ENCODE measurements at regions of chr1 and their contacts with region 1.

Region 1: GRCh38 chr1:21511579-21512522 is 2.6 kb downstream of the ALPL start:
- DNase-seq: no peak
- H3K4me3 ChIP-seq: peak overlapping the region in 5 of 8 donors; percentile 46 to 67 (median 49)
- H3K27ac ChIP-seq: peak overlapping the region in 3 of 8 donors; percentile 1 to 30 (median 15)
- H3K4me1 ChIP-seq: peaks cover 8 to 74% (median 34%) of the 10 kb centered on the region in 6 donors
- H3K27me3 ChIP-seq: peaks cover 0 to 45% (median 22%) of the 10 kb centered on the region in 7 donors
- CTCF ChIP-seq: no peak
- POLR2A ChIP-seq: no peak

Region 2: DNA sequence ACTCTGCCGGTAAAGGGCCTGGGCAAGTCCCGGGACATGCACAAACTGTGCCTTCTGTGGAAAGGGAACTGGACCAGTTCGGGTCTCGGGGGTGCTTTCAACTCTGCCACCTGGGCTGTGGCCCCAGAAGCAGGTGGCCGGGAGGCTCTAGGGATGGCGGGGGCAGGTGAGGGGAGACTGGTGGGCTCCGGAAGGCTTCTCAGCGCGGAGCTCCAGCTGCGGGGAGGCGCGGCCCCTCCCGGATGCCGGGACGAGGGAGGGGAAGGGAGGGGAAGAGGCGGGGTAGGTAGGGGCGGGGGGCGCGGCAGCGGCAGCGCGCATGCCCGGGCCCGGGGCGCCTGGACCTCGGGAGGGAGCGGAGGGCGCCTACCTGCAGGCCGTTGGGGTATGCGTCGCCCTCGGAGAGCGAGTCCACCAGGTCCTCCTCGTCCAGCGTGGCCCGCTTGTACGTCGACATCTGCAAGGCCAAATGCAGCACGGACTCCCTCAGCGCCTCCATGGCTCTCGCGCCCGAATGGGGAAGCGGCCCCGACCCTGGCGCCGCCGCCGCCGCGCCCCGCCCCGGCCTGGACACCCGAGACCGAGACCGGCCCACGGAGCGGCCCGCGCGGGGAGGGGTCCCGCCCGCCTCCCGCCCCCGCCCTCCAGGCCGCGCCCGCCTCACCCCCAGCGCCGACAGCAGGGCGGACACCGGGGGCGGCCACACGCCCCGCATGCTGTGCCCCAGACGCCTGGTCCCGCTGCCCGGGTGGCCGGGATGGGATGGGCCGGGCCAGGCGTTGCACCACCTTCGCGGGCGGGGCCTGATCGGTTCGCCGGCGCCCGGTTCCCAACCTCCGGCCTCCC is 221.9 kb before region 1 on chr1 and contains the start of gene ECE1:
- intact Hi-C with region 1: no loop called
- DNase-seq: peak; percentile 95
- H3K4me3 ChIP-seq: peak within 1 kb of the TSS; percentile 63 to 90 (median 70)
- H3K27ac ChIP-seq: peak within 1 kb of the TSS; percentile 83 to 96 (median 92)
- H3K4me1 ChIP-seq: peaks cover 33 to 97% (median 75%) of the 10 kb centered on the region in 6 donors
- H3K27me3 ChIP-seq: no peaks in the 10 kb centered on the region
- CTCF ChIP-seq: peak in 1 of 11 experiments; percentile 11
- POLR2A ChIP-seq: no peak
- total RNA-seq, gene ECE1: 95.3 to 142 (median 124) TPM

Region 3: GRCh38 chr1:21573971-21574465 is 62.2 kb after region 1 on chr1:
- intact Hi-C with region 1: loop called (anchors 10 kb)
- DNase-seq: peak; percentile 88
- H3K4me3 ChIP-seq: no peak overlapping the region
- H3K27ac ChIP-seq: peak overlapping the region in 5 of 8 donors; percentile 41 to 66 (median 57)
- H3K4me1 ChIP-seq: peaks cover 0 to 20% (median 12%) of the 10 kb centered on the region in 6 donors
- H3K27me3 ChIP-seq: peaks cover 0 to 36% (median 7%) of the 10 kb centered on the region in 7 donors
- CTCF ChIP-seq: peak in 9 of 11 experiments; percentile 8 to 60 (median 51)
- POLR2A ChIP-seq: no peak

Region 4: DNA sequence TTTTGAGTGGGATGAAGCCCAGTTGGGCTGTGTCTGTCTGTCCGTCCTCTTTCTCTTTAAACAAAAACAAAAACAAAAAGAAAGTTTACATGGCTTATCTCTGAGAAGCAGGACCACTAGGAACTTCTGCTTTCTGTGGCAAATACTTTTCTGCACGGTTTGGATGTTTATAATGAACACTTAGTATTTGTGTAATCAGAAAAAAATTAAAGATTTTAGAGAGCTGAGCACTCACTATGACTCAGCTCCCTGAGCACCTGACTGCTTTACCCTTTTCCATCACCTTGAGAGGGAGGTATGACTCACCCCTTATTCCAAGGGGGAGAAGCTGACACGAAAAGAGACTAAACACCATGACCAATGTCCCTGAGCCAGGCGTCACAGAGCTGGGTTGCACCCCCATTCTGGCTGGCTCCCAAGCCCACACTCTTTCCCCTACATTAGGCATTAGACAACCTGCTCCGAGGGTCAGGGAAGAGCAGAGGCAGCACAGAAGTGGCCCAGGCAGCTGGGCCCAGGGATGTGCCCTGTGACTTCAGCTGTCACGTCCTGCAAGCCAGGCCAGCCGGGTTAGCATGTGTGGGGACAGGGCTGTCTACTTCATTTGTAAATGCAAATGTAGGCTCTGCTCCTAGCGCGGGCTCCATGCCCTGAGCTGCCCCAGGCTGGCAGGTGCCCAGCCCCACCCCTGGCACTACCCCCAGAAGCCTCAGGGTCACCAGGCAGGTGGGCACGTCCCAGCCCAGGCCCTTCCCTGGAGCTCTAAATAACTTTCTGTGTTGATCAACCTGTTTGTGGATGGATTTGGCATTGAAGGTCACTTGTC is 126.9 kb after region 1 on chr1:
- intact Hi-C with region 1: no loop called
- DNase-seq: no peak
- H3K4me3 ChIP-seq: no peak overlapping the region
- H3K27ac ChIP-seq: no peak overlapping the region
- H3K4me1 ChIP-seq: no peaks in the 10 kb centered on the region
- H3K27me3 ChIP-seq: peaks cover 0 to 35% (median 0%) of the 10 kb centered on the region in 7 donors
- CTCF ChIP-seq: no peak
- POLR2A ChIP-seq: no peak

Region 5: DNA sequence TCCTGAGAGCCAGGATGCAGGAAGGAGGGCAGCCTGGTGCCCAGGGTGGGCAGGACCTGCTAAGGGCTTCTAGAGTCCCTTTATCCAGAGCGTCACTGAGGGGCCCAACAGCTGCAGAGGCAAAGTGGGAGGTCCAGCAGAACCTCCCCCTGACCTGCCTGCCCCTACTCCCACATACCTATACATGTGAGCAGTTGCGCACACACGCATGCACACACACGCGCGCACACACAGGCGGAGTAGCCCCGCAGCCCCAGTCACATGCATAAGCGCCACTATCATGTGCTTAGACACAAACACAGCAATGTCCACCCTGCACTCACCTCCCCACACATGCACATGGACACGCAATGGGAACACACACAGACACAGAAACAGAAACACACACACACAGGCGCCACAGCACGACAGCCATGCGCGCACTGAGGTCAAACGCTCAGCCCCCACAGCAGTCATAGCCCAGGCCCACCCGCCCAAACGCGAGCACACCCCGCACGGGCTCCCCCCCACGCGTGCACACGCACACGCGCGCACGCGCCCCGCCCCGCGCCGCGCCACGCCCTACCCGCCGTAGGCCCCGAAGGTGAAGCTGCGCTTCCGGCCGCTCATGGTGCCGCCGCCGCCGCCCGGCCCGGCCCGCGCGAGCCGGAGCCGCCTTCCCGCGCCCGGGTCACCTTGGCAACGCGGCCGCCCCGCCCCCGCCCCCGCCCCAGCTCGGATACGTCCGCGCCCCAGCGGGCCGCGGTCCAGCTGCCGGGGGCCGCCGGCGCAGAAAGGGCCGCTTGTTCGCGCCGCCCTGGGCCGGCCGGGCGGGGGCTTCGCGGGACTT is 139.6 kb after region 1 on chr1:
- intact Hi-C with region 1: no loop called
- DNase-seq: peak; percentile 84
- H3K4me3 ChIP-seq: peak overlapping the region; percentile 23 to 71 (median 41)
- H3K27ac ChIP-seq: no peak overlapping the region
- H3K4me1 ChIP-seq: peaks cover 7 to 23% (median 12%) of the 10 kb centered on the region in 6 donors
- H3K27me3 ChIP-seq: peaks cover 0 to 68% (median 9%) of the 10 kb centered on the region in 7 donors
- CTCF ChIP-seq: no peak
- POLR2A ChIP-seq: no peak

Region 6: DNA sequence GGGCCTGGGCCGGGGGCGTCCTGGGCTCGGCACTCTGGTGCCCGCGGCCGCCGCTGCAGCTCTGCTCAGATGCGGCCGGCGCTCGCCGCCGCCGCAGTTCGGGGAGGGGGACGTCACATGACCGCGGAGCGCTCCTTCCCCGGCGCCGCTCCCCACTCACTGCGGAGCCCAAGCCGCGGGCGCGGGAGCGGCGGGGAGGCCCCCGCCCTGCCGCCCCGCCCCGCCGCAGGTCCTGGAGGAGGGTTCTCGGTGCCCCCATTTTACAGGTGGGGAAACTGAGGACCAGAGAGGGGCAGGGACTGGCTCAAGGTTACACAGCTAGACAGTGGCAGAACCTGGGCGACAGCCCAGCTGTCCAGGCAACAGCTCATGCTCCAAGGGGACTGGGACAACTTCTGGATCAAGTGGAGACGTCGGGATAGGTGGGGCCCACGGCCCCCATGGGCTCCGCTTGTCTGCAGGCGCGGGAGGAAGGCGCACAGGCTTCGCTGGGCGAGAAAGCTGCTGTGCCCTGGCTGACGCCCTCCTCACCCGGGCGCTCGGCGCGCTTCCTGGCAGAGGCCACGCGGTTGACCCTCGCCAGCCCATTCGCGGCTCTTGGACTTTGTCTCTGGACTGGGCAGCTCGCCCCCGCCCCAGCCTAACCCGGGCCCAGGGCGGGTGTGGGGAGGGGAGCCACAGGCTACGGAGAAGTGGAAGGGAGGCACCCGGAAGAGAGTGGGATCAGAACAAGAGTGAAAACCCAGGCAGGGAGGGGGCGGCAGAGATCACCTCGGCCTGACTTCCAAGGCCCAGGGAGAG is 157.6 kb after region 1 on chr1 and contains the start of gene RAP1GAP:
- intact Hi-C with region 1: loop called (anchors 10 kb)
- DNase-seq: peak; percentile 82
- H3K4me3 ChIP-seq: peak within 1 kb of the TSS; percentile 5 to 66 (median 35)
- H3K27ac ChIP-seq: no peak within 1 kb of the TSS
- H3K4me1 ChIP-seq: peaks cover 9 to 59% (median 37%) of the 10 kb centered on the region in 6 donors
- H3K27me3 ChIP-seq: peaks cover 0 to 62% (median 38%) of the 10 kb centered on the region in 7 donors
- CTCF ChIP-seq: no peak
- POLR2A ChIP-seq: no peak
- total RNA-seq, gene RAP1GAP: 0.69 to 12.1 (median 1.0) TPM